Activated CD4-positive, alpha-beta T cell treated with anti-CD3 and anti-CD28 coated beads for 36 hours (primary cell): ENCODE measurements at regions of chr12 and their contacts with region 1.

Region 1: DNA sequence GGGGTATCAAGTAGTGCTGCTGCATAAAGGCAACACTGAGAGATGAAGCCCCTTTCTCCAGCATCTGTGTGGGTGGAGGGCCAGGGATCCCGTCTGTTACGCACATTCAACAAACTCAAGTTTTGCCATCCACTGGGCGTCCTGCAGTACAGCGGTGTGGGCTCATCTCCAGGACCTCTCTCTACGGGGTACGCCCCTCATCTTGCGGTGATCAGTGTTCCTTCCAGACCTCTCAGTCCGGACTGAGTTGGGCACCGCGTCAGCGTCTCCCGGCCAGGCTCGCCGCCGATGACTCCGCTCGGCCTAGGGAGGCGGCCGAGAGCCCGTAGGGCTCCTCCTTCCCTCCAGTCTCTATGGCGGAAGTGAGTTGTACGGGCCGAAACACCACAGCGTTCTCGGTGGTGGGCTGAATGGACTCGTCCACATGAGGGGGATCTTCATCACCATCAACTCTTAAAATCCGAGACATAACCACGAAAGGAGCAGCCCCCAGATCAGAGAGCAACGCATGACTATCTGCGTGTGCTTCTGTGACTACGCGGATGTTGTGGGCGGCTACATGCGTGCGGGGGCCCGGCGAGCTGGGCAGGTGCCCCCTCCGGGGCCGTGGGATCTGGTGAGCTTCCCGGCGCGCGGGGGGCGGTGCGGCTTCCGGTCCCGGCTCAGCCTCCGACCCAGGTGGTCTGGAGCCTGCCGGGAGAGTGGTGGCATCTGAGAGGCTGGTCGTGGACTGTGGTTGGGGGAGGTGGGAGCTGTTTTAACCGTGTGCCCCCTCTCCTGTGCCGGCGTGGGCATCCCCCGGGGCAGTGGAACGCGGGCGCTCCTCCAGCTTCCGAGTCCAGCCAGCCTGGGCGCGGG is at the start of gene ATG101:
- DNase-seq: peak; percentile 92
- ATAC-seq: peak; percentile 95
- H3K4me3 Mint-ChIP-seq: peak within 1 kb of the TSS; percentile 99
- H3K27ac Mint-ChIP-seq: peak within 1 kb of the TSS; percentile 99
- H3K4me1 Mint-ChIP-seq: peaks cover 56% of the 10 kb centered on the region
- H3K27me3 Mint-ChIP-seq: no peaks in the 10 kb centered on the region
- total RNA-seq, gene ATG101: 24.0 to 30.7 TPM

Region 2: DNA sequence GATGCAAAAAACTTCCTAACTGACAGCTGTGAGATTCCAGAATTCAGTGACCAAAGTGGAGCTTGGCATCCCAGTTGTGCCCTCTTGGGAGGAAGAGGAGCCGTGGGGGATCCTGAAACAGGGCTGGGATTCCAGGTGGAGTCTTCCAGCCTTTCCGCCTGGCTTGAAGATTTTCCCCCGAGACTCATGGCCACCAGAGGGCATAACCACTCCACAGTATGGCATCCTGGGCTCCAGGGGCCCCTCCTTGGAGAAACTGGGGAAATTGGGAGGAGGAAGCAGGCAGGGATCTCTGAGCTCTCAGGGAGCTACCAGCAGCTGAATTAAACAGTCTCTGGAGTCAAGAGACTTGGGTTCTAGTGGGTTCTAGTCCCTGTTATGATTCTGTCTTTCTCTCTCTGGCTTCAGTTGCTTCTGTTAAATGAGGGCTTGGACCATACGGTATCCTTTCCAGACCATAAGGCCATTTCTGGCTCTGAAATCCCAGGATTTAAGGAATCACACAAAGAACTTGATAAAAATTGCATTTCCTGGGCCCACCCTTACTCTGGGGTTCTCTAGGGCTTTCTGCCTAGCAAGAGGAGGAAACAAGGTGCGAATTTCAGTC is 65.4 kb before region 1 on chr12:
- CTCF ChIA-PET with region 1: interaction called, 3 read pairs
- POLR2A ChIA-PET with region 1: interaction called, 3 read pairs
- intact Hi-C with region 1: loop called in 1 of 2 experiments (anchors 1 kb)
- DNase-seq: peak; percentile 43
- ATAC-seq: no peak
- H3K4me3 Mint-ChIP-seq: no peak overlapping the region
- H3K27ac Mint-ChIP-seq: no peak overlapping the region
- H3K4me1 Mint-ChIP-seq: peaks cover 13% of the 10 kb centered on the region
- H3K27me3 Mint-ChIP-seq: peaks cover 4% of the 10 kb centered on the region

Region 3: GRCh38 chr12:52032804-52033502 is 36.6 kb before region 1 on chr12:
- CTCF ChIA-PET with region 1: interaction called, 253 read pairs
- POLR2A ChIA-PET with region 1: interaction called, 10 read pairs
- intact Hi-C with region 1: loop called (anchors 1 to 2 kb)
- DNase-seq: peak; percentile 95
- ATAC-seq: peak; percentile 98
- H3K4me3 Mint-ChIP-seq: peak overlapping the region; percentile 70
- H3K27ac Mint-ChIP-seq: peak overlapping the region; percentile 84
- H3K4me1 Mint-ChIP-seq: peaks cover 42% of the 10 kb centered on the region
- H3K27me3 Mint-ChIP-seq: no peaks in the 10 kb centered on the region

Region 4: GRCh38 chr12:52050761-52051541 is 18.6 kb before region 1 on chr12 and contains the start of gene NR4A1:
- CTCF ChIA-PET with region 1: interaction called, 36 read pairs
- POLR2A ChIA-PET with region 1: interaction called, 7 read pairs
- intact Hi-C with region 1: loop called (anchors 1 kb)
- DNase-seq: peak; percentile 100
- ATAC-seq: peak; percentile 88
- H3K4me3 Mint-ChIP-seq: peak within 1 kb of the TSS; percentile 92
- H3K27ac Mint-ChIP-seq: peak within 1 kb of the TSS; percentile 91
- H3K4me1 Mint-ChIP-seq: peaks cover 38% of the 10 kb centered on the region
- H3K27me3 Mint-ChIP-seq: no peaks in the 10 kb centered on the region
- total RNA-seq, gene NR4A1: 69.4 to 72.8 TPM

Region 5: DNA sequence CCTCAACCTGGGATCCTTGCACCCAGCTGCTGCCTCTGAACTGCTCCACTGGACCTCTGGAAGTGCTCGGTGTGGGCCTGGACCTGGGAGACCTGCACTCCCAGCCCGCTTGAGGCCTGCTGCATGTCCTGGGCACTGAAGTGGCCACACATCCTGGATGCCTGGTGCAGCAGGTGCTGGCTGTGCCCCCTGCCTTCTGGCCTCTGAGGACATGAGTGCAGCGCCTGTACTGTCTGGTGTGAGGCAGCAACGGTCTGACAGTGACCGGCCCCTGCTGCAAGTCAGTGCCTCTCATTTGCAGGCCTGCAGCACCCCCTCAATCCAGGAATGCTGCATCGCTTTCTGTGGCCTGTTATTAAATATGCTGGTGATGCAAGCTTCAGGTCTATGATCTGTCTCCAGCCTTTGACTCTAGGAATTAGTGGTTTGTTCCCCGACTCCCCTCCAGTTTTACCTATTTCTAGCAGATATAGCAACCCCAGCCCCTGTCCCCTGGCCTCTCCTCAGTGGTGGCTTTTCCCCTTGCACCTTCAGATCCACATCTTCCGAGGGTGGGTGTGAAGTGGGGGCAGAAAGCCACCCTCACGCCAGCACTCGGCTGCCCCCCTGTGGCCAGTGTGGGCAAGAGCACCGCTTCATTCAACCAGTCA is 13.6 kb after region 1 on chr12:
- CTCF ChIA-PET with region 1: interaction called, 13 read pairs
- POLR2A ChIA-PET with region 1: interaction called, 3 read pairs
- intact Hi-C with region 1: no loop called
- DNase-seq: peak; percentile 81
- ATAC-seq: peak; percentile 83
- H3K4me3 Mint-ChIP-seq: no peak overlapping the region
- H3K27ac Mint-ChIP-seq: no peak overlapping the region
- H3K4me1 Mint-ChIP-seq: peaks cover 8% of the 10 kb centered on the region
- H3K27me3 Mint-ChIP-seq: peaks cover 7% of the 10 kb centered on the region